ENCODE measurements at regions of chr3 and their contacts with region 1.

Region 1: GRCh38 chr3:120182724-120183524 is 88.7 kb upstream of the GSK3B start:
- DNase-seq: no peak
- H3K4me3 Mint-ChIP-seq: no peak overlapping the region
- H3K27ac Mint-ChIP-seq: no peak overlapping the region
- H3K4me1 Mint-ChIP-seq: no peaks in the 10 kb centered on the region
- H3K27me3 Mint-ChIP-seq: peaks cover 11% of the 10 kb centered on the region

Region 2: GRCh38 chr3:119819806-119820205 is 363.1 kb before region 1 on chr3:
- intact Hi-C with region 1: loop called (anchors 5 kb)
- DNase-seq: no peak
- H3K4me3 Mint-ChIP-seq: no peak overlapping the region
- H3K27ac Mint-ChIP-seq: no peak overlapping the region
- H3K4me1 Mint-ChIP-seq: no peaks in the 10 kb centered on the region
- H3K27me3 Mint-ChIP-seq: no peaks in the 10 kb centered on the region

Region 3: DNA sequence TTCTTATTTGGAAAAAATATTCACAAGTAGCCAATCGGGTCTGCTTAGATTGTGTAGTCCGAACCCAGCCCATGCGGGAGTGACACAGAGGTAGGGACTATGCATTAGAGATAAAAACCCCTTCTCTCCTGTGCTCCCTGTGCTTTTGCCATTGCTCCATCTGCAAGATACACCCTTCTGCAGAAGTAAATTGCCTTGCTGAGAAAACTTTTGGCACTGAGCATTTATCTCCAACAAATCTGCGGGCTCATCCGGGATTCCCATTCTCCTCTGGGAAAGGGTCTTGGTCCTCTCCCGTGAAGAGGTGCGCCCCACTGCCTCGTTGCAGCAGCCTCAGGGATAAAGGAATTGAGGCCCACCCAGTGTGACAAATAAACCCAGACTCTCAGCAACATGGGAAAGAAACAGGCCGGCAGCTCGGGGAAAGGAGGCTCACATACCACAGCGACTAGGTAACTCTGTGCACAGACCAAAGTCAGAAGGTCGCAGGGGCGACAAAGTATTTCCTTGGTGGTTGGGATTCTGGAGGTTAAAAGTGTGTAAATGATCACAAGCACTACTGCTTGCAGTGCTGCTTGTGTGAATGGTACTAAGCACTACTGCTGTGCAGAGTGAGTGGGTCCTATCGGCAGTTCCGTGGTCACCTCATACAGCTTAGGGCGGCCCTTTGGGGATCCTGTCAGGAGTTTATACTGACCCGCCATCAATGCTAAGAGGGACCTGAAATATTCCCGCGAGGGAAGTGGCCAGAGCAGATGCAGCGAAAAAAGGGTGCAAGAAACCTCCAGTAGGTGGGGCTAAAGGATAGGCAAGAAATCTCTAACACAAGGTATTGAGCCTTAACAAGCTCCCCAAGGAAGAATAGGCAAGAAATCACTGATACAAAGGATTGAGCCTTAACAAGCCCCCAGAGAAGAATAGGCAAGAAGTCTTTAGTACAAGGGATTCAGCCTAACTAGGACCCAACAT is 143.0 kb before region 1 on chr3:
- intact Hi-C with region 1: loop called (anchors 5 kb)
- DNase-seq: peak; percentile 65
- H3K4me3 Mint-ChIP-seq: no peak overlapping the region
- H3K27ac Mint-ChIP-seq: no peak overlapping the region
- H3K4me1 Mint-ChIP-seq: peaks cover 3% of the 10 kb centered on the region
- H3K27me3 Mint-ChIP-seq: no peaks in the 10 kb centered on the region

Measured in activated CD4-positive, alpha-beta T cell treated with anti-CD3 and anti-CD28 coated beads, Interleukin-2, amount 10 ng/mL, durations not matched to agents 24 days and 14 days (primary cell).